ENCODE measurements at regions of chr5 and their contacts with region 1.

Region 1: GRCh38 chr5:64612344-64612961 is 77.8 kb upstream of the SHISAL2B start:
- DNase-seq: peak; percentile 57
- H3K4me3 Mint-ChIP-seq: no peak overlapping the region
- H3K27ac Mint-ChIP-seq: no peak overlapping the region
- H3K4me1 Mint-ChIP-seq: peaks cover 7% of the 10 kb centered on the region
- H3K27me3 Mint-ChIP-seq: peaks cover 14% of the 10 kb centered on the region
- CTCF ChIP-seq: peak; percentile 66

Region 2: GRCh38 chr5:64074533-64074932 is 537.9 kb before region 1 on chr5:
- CTCF ChIA-PET with region 1: no interaction called
- intact Hi-C with region 1: loop called (anchors 5 kb)
- DNase-seq: peak; percentile 26
- H3K4me3 Mint-ChIP-seq: no peak overlapping the region
- H3K27ac Mint-ChIP-seq: no peak overlapping the region
- H3K4me1 Mint-ChIP-seq: no peaks in the 10 kb centered on the region
- H3K27me3 Mint-ChIP-seq: peaks cover 15% of the 10 kb centered on the region
- CTCF ChIP-seq: peak; percentile 33

Region 3: DNA sequence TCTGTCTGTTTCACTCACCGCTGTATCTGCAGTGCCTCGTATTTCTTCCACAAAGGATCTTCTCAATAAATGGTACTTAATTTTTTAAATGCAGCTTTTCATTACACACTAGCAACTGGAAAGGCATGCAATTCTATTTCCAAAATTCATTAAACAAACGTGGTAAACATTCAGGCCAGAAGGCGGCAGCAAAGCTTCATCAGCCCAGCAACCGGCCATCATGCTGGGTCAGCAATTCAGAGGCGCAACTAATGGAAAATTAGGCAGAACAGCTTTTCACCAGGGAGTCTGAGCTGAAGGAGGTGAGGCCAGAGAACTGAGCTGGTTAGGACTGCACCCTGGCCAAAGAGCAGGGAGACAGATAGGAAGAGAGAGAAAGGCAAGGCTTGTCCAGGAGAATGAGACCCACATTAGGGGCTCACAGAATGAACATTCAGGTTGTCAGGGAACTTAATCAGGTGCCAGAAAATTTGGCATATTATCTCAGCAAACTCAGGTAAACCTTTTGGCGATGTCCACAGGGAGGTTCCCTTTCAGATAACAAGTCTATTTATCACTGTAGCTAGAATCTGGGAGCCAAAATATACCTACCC is 464.5 kb before region 1 on chr5:
- CTCF ChIA-PET with region 1: interaction called, 3 read pairs
- intact Hi-C with region 1: loop called (anchors 1 kb)
- DNase-seq: peak; percentile 59
- H3K4me3 Mint-ChIP-seq: no peak overlapping the region
- H3K27ac Mint-ChIP-seq: no peak overlapping the region
- H3K4me1 Mint-ChIP-seq: no peaks in the 10 kb centered on the region
- H3K27me3 Mint-ChIP-seq: peaks cover 12% of the 10 kb centered on the region
- CTCF ChIP-seq: peak; percentile 67

Region 4: GRCh38 chr5:64229163-64229774 is 383.2 kb before region 1 on chr5:
- CTCF ChIA-PET with region 1: interaction called, 14 read pairs
- intact Hi-C with region 1: loop called (anchors 1 kb)
- DNase-seq: no peak
- H3K4me3 Mint-ChIP-seq: no peak overlapping the region
- H3K27ac Mint-ChIP-seq: no peak overlapping the region
- H3K4me1 Mint-ChIP-seq: peaks cover 8% of the 10 kb centered on the region
- H3K27me3 Mint-ChIP-seq: no peaks in the 10 kb centered on the region
- CTCF ChIP-seq: peak; percentile 32

Region 5: DNA sequence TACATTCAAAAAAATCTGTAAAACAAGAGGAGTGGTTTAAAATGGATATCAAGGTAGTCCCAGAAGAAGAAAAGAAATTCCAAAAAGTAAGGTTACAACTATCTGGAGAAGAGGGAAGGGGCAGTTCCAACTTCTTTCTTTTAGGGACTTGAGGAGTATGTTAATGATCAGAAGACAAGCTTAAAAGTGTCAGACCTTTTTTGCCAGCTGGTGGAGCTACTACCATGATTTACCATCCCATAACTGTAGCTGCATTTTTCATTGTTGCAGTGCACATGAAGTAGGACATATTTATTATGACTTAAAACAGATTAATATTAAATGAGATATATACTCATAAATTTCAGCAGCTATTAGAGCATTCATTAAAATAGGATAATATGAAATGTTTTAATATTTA is 265.1 kb before region 1 on chr5:
- CTCF ChIA-PET with region 1: interaction called, 14 read pairs
- intact Hi-C with region 1: loop called (anchors 1 kb)
- DNase-seq: no peak
- H3K4me3 Mint-ChIP-seq: no peak overlapping the region
- H3K27ac Mint-ChIP-seq: no peak overlapping the region
- H3K4me1 Mint-ChIP-seq: no peaks in the 10 kb centered on the region
- H3K27me3 Mint-ChIP-seq: no peaks in the 10 kb centered on the region
- CTCF ChIP-seq: no peak

Region 6: GRCh38 chr5:64384761-64385160 is 227.7 kb before region 1 on chr5:
- CTCF ChIA-PET with region 1: no interaction called
- intact Hi-C with region 1: loop called (anchors 1 kb)
- DNase-seq: peak; percentile 57
- H3K4me3 Mint-ChIP-seq: no peak overlapping the region
- H3K27ac Mint-ChIP-seq: no peak overlapping the region
- H3K4me1 Mint-ChIP-seq: no peaks in the 10 kb centered on the region
- H3K27me3 Mint-ChIP-seq: no peaks in the 10 kb centered on the region
- CTCF ChIP-seq: peak; percentile 48

Region 7: GRCh38 chr5:64505769-64506566 is 106.5 kb before region 1 on chr5 and contains the start of gene RGS7BP:
- CTCF ChIA-PET with region 1: no interaction called
- intact Hi-C with region 1: loop called (anchors 2 kb)
- DNase-seq: no peak
- H3K4me3 Mint-ChIP-seq: peak within 1 kb of the TSS; percentile 57
- H3K27ac Mint-ChIP-seq: no peak within 1 kb of the TSS
- H3K4me1 Mint-ChIP-seq: no peaks in the 10 kb centered on the region
- H3K27me3 Mint-ChIP-seq: peaks cover 59% of the 10 kb centered on the region
- CTCF ChIP-seq: no peak
- total RNA-seq, gene RGS7BP: not detected in 2 replicates

Region 8: GRCh38 chr5:64516216-64516615 is 96.2 kb before region 1 on chr5:
- CTCF ChIA-PET with region 1: no interaction called
- intact Hi-C with region 1: no loop called
- DNase-seq: no peak
- H3K4me3 Mint-ChIP-seq: no peak overlapping the region
- H3K27ac Mint-ChIP-seq: no peak overlapping the region
- H3K4me1 Mint-ChIP-seq: peaks cover 8% of the 10 kb centered on the region
- H3K27me3 Mint-ChIP-seq: no peaks in the 10 kb centered on the region
- CTCF ChIP-seq: no peak

Region 9: DNA sequence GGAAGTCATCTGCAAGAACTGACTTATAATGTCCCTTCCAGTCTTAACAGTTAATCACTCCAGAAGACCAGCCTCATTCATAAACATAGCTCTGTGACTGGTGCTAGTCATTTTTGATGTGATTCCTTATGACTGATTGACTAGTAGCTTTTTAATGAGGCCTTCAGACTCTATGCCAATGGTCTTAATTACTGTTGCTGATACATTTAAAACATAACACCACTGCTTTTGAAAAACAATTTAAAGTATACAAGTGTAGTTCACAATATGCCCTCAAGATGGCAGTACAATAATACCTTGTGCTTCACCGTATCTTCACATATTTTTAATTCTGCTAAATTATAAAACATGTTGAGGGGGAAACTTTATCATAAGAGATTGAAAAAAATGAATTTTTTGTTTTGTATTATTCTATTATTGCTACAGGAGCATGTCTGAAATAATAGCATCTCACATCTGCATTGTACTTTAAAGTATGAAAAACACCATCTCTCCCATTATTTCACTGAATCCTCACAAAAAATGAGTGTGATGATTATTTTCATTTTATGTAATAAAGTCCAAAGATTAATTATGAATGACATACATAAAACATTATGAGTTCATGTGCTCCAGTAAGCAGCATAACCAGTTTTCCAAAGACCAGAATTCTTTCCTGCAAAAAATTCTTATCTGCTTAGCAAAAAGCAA is 22.7 kb after region 1 on chr5:
- CTCF ChIA-PET with region 1: no interaction called
- intact Hi-C with region 1: no loop called
- DNase-seq: no peak
- H3K4me3 Mint-ChIP-seq: no peak overlapping the region
- H3K27ac Mint-ChIP-seq: no peak overlapping the region
- H3K4me1 Mint-ChIP-seq: no peaks in the 10 kb centered on the region
- H3K27me3 Mint-ChIP-seq: peaks cover 16% of the 10 kb centered on the region
- CTCF ChIP-seq: peak; percentile 46

Measured in Calu3 (cell line).